ENCODE measurements at regions of chr11 and their contacts with region 1.

Region 1: DNA sequence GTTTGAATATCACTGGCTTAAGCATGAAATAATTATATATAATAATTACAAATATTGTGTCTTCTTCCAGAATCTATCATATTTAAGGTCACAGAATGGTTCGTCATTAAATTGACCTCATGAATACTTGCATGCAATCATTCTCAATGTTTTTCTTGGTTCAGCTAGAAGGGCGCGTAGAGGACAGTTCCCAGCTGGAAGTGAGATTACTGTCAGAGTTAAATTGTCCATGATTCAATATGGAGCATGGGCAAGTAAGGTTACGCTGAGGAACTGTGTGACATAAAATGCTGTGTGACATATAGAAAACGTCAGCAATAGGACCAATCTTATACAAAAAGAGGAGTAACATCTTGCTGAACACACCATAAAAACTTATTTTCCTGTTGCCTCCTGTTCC is 2423.5 kb upstream of the RAG2 start:
- DNase-seq: no peak
- H3K27ac ChIP-seq: no peak overlapping the region
- CTCF ChIP-seq: no peak

Region 2: GRCh38 chr11:38796281-38796680 is 225.3 kb before region 1 on chr11:
- CTCF ChIA-PET with region 1: interaction called, 11 read pairs
- POLR2A ChIA-PET with region 1: no interaction called
- DNase-seq: no peak
- H3K27ac ChIP-seq: no peak overlapping the region
- CTCF ChIP-seq: no peak

Region 3: DNA sequence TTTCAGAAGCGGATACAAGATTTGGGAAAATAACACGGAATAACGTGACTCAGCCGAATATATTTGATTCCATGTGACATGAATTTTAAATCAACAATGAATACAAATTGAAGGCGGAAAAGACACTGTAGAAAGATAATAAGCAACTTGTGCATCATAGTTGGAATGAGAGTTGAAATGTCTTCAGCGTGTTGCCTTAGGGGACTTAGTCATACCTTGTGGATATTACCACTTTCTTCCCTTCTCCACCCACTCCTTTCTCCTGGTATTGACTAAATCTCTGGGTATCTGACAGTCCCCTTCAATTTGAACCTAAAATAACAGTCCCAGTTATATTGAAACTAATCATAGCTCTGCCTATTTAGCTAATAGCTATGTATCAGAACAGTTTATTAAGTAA is 50.4 kb before region 1 on chr11:
- CTCF ChIA-PET with region 1: no interaction called
- POLR2A ChIA-PET with region 1: no interaction called
- DNase-seq: peak; percentile 81
- H3K27ac ChIP-seq: no peak overlapping the region
- CTCF ChIP-seq: no peak

Measured in RWPE1 (cell line).